Activated CD8-positive, alpha-beta T cell treated with anti-CD3 and anti-CD28 coated beads for 36 hours (primary cell): ENCODE measurements at regions of chr9 and their contacts with region 1.

Region 1: GRCh38 chr9:131668439-131669268 is 71.2 kb downstream of the RAPGEF1 start:
- DNase-seq: peak; percentile 87
- ATAC-seq: peak; percentile 74
- H3K4me3 Mint-ChIP-seq: peak overlapping the region; percentile 71
- H3K27ac Mint-ChIP-seq: peak overlapping the region; percentile 100
- H3K4me1 Mint-ChIP-seq: peaks cover 81% of the 10 kb centered on the region
- H3K27me3 Mint-ChIP-seq: no peaks in the 10 kb centered on the region
- CTCF ChIP-seq: no peak

Region 2: DNA sequence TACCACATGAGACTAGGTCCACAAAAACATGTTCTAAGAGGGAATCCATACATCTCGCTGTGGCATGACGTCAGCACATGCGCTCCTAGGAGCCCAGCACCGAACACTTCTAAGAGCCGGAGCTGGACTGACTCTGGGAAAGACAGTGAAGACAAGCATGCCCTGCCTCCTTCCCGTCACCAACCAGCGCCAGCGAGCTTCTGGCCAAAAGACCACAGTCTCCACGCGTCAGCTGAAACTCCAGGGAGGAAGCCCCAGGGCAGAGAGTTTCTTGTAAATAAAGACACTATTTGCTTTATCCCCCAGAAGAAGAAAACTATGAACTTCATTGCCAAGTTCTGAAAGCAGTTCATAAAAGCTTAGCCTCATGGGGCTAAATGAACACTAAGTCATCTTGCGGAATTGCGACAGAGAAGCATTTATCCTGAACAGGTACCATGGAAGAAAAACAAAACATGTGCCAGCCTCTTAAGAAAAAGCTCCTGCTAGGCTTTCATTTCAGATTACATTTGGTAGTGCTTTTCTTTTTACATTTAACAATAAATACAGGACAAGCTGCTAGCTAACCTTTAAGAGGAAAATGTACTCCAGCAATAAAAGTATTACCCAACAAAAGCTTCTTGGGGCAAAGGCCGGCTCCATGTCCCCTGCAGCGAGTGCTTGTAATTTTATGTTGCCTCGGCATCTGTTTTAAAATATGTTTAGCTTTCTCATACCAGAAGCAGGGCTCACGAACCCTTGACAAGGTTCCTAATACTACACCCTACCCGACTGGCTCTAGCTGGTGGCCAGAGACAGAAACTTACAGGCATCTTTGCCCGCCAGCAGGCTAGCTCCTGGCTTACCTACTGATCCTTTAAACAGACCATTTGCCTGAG is 26.8 kb before region 1 on chr9:
- CTCF ChIA-PET with region 1: interaction called, 5 read pairs
- POLR2A ChIA-PET with region 1: interaction called, 13 read pairs
- intact Hi-C with region 1: no loop called
- DNase-seq: no peak
- ATAC-seq: no peak
- H3K4me3 Mint-ChIP-seq: no peak overlapping the region
- H3K27ac Mint-ChIP-seq: peak overlapping the region; percentile 96
- H3K4me1 Mint-ChIP-seq: peaks cover 49% of the 10 kb centered on the region
- H3K27me3 Mint-ChIP-seq: no peaks in the 10 kb centered on the region
- CTCF ChIP-seq: no peak

Region 3: DNA sequence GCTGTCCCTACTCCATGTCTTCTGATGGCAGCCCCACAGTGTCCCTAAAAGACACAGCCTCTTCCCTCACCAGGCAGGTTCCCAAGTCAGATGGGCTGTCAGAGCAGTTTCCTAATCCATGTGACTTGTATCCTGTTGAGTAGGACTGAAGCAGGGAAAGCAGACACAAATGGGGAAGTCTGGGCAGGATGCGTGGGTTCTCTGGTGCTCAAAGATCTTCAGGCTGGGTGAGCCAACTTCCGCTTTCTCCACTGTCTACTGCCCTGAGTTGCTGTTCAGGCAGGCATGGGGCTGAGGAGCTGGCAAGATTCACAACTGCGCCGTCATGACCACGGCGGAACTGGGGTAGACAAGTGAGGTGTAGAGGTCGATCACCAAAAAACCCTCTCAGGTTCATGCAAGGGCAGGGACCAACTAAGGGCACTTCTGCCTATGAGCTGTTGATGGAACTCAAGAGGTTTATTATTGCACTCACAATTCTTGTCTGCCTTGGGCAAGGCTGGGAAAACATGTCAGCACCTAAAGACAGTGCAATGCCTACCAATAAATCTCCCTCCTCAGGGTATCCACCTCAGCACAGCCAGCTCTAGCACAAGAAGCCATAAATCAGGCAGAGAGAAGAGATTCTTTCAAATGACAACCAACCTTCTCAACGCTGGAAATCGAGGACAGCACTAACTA is 12.2 kb before region 1 on chr9:
- CTCF ChIA-PET with region 1: interaction called, 5 read pairs
- POLR2A ChIA-PET with region 1: interaction called, 11 read pairs
- intact Hi-C with region 1: no loop called
- DNase-seq: peak; percentile 82
- ATAC-seq: peak; percentile 79
- H3K4me3 Mint-ChIP-seq: peak overlapping the region; percentile 37
- H3K27ac Mint-ChIP-seq: peak overlapping the region; percentile 94
- H3K4me1 Mint-ChIP-seq: peaks cover 84% of the 10 kb centered on the region
- H3K27me3 Mint-ChIP-seq: no peaks in the 10 kb centered on the region
- CTCF ChIP-seq: no peak

Region 4: DNA sequence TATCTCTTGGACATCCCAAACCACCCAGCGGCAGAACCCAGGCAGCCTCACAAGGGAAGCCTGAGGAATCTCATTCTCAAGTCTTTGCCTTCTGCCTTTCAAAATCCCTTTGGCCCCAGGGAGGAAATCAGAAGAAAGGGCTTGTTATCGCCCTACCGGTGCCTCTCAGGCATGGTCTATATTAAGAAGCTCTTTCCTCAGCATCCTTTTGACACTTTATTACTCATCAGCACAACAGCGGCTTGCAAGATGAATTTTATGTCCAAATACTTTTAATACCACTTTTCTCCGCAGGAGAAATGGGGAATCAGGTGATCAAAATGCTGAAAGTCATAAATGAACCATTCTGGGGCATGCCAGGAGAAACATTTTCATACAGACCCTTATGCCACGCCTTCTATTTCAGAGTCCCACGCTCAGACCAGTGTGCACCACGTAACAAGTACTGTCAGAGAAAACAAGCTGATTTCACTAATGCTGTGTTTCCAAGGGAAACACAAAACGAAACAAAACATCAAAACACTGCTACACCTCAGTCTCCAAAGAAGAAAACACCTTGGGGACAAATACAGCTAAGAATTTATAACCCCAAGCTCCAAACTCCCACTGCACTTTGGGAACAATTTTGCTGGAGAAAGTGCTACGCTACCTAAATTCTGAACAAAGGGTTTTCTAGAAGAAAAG is 41.3 kb after region 1 on chr9:
- CTCF ChIA-PET with region 1: interaction called, 3 read pairs
- POLR2A ChIA-PET with region 1: interaction called, 13 read pairs
- intact Hi-C with region 1: loop called (anchors 2 kb)
- DNase-seq: peak; percentile 60
- ATAC-seq: peak; percentile 76
- H3K4me3 Mint-ChIP-seq: peak overlapping the region; percentile 42
- H3K27ac Mint-ChIP-seq: peak overlapping the region; percentile 90
- H3K4me1 Mint-ChIP-seq: peaks cover 72% of the 10 kb centered on the region
- H3K27me3 Mint-ChIP-seq: no peaks in the 10 kb centered on the region
- CTCF ChIP-seq: no peak